ENCODE measurements at regions of chr2 and their contacts with region 1.

Region 1: DNA sequence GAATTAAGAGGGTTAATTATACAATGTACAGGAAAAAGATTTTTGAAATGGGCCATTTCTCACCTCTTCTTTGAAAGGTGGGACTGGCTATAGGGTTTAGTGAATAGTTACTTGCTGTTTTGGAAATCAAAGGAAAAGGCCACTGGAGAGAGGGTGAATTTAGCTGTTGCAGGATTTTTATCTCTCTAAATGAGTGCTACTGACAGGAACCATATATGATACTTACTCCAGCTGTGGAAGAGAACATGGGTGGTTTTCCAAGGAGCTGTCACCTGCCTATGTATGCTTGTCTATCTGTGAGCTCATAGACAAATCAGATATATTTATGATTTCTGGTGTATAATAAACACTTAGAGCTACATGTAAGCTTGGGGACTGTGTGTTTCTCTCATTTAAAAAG is 430.4 kb downstream of the MTX2 start:
- DNase-seq: no peak
- H3K4me3 ChIP-seq: no peak overlapping the region
- CTCF ChIP-seq: no peak

Region 2: DNA sequence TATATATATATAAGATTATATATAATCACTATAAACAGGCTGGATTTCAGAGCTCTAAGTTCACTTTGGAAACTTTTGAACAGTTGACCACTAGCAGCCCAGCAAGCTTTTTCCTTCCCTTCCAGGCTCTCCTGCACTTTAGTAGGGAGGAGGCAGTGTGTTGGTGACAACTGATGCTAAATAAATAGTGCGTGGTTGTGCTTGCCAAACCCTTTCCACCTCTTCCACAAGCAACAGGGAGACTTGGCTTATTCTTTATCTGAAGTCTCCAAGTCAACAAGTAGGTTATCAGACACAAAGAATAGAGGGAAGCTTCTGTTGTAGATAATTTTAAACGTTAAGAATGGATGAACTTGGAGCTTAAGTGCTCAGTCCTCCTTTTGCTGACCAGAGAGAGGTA is 104.7 kb after region 1 on chr2:
- in situ Hi-C with region 1: loop called (anchors 5 kb)
- DNase-seq: no peak
- H3K4me3 ChIP-seq: no peak overlapping the region
- CTCF ChIP-seq: no peak